ENCODE measurements at regions of chr2 and their contacts with region 1.

Region 1: GRCh38 chr2:175366815-175367214 is 185.3 kb upstream of the ATP5MC3 start:
- DNase-seq: peak; percentile 70
- H3K4me3 ChIP-seq: no peak overlapping the region
- H3K27ac ChIP-seq: no peak overlapping the region
- H3K4me1 ChIP-seq: no peaks in the 10 kb centered on the region
- H3K27me3 ChIP-seq: peaks cover 5 to 34% of the 10 kb centered on the region in 2 experiments
- CTCF ChIP-seq: peak; percentile 74 to 75
- POLR2A ChIP-seq: no peak

Region 2: DNA sequence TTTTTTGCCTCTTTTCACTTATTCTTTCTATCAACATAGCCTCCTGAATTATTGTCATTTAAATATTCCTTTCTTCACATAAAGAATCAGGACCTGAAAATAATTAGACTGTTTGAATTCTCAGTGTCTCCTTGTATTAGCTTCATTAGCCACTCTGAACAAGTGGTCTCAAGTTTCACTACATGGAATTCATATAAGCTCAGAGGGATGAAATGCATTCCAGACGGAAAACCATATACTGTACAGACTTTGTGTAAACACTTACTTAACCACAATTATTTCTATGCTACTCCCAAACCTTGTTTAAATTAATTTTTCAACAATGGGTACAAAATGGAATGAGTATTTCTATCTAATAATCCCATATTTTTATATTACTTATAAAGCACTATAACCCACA is 415.1 kb before region 1 on chr2:
- CTCF ChIA-PET with region 1: no interaction called
- POLR2A ChIA-PET with region 1: no interaction called
- dilution Hi-C with region 1: no loop called
- intact Hi-C with region 1: no loop called
- DNase-seq: no peak
- H3K4me3 ChIP-seq: no peak overlapping the region
- H3K27ac ChIP-seq: no peak overlapping the region
- H3K4me1 ChIP-seq: peaks cover 10% of the 10 kb centered on the region
- H3K27me3 ChIP-seq: no peaks in the 10 kb centered on the region
- CTCF ChIP-seq: no peak
- POLR2A ChIP-seq: no peak

Region 3: DNA sequence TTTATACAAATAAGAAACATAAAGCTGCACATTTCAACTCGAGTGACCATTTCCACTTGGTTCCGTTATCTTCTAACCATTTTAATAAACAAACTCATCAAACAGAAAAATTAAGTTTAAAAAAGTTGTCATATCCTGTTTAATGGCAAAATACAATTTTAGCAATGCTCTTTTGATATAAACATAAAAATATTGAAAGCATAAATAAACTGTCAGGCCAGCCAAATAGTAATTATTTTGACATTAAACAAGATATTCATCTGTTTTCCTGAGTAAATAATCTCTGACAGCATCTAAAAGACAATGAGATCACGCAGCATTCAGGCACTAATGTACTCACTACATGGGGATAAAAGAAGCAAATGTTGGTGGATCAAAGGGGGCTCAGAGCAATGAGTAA is 40.0 kb before region 1 on chr2:
- CTCF ChIA-PET with region 1: no interaction called
- POLR2A ChIA-PET with region 1: no interaction called
- dilution Hi-C with region 1: no loop called
- intact Hi-C with region 1: no loop called
- DNase-seq: no peak
- H3K4me3 ChIP-seq: no peak overlapping the region
- H3K27ac ChIP-seq: no peak overlapping the region
- H3K4me1 ChIP-seq: no peaks in the 10 kb centered on the region
- H3K27me3 ChIP-seq: no peaks in the 10 kb centered on the region
- CTCF ChIP-seq: no peak
- POLR2A ChIP-seq: no peak

Region 4: GRCh38 chr2:175690113-175690837 is 323.5 kb after region 1 on chr2:
- CTCF ChIA-PET with region 1: interaction called, 15 read pairs
- POLR2A ChIA-PET with region 1: no interaction called
- dilution Hi-C with region 1: no loop called
- intact Hi-C with region 1: loop called (anchors 1 kb)
- DNase-seq: peak; percentile 81
- H3K4me3 ChIP-seq: no peak overlapping the region
- H3K27ac ChIP-seq: no peak overlapping the region
- H3K4me1 ChIP-seq: no peaks in the 10 kb centered on the region
- H3K27me3 ChIP-seq: peaks cover 2 to 4% of the 10 kb centered on the region in 2 experiments
- CTCF ChIP-seq: peak; percentile 42 to 54
- POLR2A ChIP-seq: no peak

Measured in endothelial cell of umbilical vein (primary cell).